ENCODE measurements at regions of chr14 and their contacts with region 1.

Region 1: GRCh38 chr14:77593501-77593961 is 22.9 kb downstream of the SPTLC2 start:
- DNase-seq: peak; percentile 59
- H3K4me3 ChIP-seq: peak overlapping the region in 1 of 3 experiments; percentile 33
- H3K27ac ChIP-seq: peak overlapping the region; percentile 66
- H3K4me1 ChIP-seq: peaks cover 45% of the 10 kb centered on the region
- H3K27me3 ChIP-seq: no peaks in the 10 kb centered on the region
- CTCF ChIP-seq: no peak
- POLR2A ChIP-seq: no peak

Region 2: DNA sequence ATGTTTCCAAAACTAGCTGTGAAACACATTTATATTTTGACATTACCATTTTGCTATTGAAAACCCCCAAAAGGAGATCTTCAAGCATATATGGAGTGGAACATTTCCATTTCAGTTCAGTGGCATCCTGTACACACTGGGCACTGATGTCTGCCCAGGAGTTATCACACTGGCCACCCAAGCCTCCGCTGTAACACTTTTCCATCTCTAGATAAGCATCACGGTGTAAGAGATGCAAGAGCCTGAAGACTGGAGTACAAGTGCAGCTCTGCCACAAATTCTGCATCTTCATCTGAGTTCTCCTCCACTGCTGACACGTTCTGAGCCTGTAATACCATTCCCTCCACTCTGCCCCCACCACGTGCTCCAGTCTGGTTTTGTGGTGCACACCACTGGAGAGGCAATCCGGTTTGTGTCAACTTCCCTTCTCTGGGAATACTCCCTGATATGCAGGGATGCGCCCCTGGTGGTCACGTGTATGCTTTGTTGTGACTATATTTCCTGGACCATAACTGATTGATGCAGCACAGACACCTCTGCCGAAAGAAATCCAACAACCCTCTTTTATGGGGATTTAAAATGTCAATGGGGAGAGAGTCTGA is 10.2 kb after region 1 on chr14:
- CTCF ChIA-PET with region 1: interaction called, 14 read pairs
- POLR2A ChIA-PET with region 1: interaction called, 8 read pairs
- dilution Hi-C with region 1: no loop called
- intact Hi-C with region 1: loop called (anchors 2 kb)
- DNase-seq: peak; percentile 65
- H3K4me3 ChIP-seq: no peak overlapping the region
- H3K27ac ChIP-seq: peak overlapping the region; percentile 38
- H3K4me1 ChIP-seq: peaks cover 32% of the 10 kb centered on the region
- H3K27me3 ChIP-seq: no peaks in the 10 kb centered on the region
- CTCF ChIP-seq: peak; percentile 25 to 56
- POLR2A ChIP-seq: no peak

Region 3: DNA sequence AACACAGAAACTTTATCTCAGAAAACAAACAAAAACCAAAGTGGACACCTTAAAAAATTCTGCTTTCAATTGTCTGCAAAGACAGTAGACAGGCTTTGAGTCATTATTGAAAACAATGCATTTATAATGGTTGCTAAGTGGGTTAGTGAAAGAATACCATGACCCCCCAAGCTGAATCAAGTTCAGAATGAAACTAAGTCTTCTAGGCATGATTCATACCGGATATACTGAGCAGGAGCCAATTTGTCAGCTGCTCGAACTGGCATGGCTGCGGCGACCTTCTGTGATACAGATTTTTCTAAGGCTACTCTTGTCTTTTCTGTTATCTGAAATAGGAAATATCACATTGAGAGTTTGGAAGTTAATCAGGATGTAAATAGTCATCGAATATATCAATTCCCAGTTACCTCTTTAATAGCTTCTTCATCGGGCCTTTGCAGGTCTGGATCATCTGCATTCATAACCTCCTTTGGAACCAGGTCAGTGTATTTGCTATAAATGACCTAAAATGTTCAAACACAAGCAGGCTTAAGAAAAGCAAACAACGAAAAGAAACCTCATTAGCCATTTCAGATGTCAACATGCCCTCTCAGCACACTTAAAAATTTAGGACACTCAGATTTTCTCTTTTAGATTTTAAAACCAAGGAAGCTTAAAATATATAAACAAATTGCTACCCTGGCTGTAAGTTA is 145.2 kb after region 1 on chr14:
- CTCF ChIA-PET with region 1: no interaction called
- POLR2A ChIA-PET with region 1: no interaction called
- dilution Hi-C with region 1: no loop called
- intact Hi-C with region 1: no loop called
- DNase-seq: peak; percentile 87
- H3K4me3 ChIP-seq: peak overlapping the region in 1 of 3 experiments; percentile 1
- H3K27ac ChIP-seq: peak overlapping the region; percentile 78
- H3K4me1 ChIP-seq: peaks cover 16% of the 10 kb centered on the region
- H3K27me3 ChIP-seq: no peaks in the 10 kb centered on the region
- CTCF ChIP-seq: no peak
- POLR2A ChIP-seq: no peak